Right ventricle myocardium inferior (tissue), 1 donor: ENCODE measurements at regions of chr19 and their contacts with region 1.

Region 1: GRCh38 chr19:12294249-12295158 is at the start of gene ZNF44:
- DNase-seq: peak; percentile 98
- ATAC-seq: peak; percentile 99
- total RNA-seq, gene ZNF44: 9.2 TPM

Region 2: DNA sequence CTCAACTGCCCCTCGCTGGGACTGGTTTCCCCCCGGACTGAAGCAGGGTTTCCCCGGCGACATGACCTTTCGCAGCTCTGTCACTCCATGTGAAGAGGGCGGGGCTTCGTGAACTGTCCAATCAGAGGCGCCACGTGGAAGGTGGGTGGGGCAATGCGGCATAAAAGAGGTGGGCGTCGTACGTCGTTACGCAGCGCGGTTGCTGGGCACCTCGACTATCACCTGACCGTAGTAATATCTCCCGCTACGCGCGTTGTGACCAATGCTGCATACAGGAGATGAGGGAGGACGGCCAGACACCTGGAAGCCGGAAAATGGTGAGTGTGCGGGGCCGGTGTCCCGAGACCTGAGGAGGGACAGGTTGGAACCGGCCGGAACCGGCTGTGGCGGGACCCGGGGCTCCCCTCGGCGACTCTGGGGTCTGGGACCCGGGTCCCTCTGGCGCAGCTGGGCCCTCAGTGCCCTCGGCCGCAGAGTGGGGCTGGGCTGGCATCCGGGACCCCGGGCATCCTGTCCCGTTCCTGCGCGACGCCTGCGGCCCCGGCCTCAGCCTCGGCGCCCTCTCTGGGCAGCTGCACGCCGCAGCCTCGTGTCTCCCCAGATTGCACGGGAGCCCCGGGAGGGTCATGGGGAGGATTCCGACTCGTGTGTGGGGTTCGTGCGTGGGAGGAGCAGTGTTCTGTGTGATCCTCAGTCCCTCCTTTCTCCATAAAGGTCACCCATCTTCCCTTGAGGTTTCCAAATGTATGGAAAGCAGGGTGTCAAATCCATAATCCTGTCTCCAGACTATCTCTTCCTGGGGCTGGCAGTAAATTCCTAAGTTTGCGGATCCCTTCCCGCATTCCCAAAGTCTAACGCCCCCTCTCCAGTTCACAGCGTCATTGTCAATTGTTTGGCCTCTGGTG is 99.4 kb before region 1 on chr19:
- intact Hi-C with region 1: no loop called
- DNase-seq: peak; percentile 90
- ATAC-seq: peak; percentile 97

Region 3: DNA sequence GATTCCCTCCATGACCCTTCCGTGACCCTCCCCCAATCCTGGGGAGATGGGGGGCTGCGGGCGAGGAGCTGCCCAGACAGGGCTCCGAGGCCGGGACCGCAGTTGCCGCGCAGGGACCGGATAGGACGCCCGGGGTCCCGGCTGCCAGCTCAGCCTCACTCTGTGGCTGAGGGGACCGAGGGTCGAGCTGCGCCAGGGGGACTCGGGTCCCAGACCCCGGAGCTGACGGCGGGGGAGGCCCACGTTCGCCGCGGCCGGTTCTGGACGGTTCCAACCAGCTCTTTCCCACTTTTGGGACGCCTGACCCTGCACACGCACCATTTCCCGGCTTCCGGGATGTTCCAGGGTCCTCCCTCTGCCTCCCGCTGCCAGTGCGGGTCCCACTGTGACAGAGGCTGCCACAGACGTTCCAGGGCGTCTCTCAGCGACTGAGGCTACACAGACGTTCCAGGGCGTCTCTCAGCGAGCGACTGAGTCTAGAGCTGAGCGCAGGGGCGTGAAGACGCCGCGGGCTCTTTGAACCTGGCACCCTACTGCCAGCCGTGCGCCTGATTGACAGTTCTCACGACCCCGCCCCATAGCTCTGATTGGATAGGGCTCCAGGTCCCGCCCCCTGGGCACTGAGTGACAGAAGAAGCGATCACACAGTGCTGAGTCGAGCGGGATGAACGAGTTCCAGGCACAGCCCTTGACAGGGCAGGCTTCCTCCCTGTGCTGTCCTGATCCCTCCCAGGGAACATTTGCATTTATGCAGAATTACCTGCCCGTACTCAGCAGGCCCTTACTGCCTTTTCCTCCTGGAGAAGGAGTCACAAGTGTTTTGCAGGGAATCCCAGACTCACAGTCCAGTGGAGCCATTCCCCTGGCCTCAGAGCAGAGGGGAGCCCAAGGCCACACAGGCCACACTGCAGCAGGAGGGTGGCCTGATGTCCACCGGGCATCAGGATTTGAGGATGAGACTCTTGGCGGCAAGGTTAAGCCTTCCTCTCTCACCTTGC is 39.0 kb after region 1 on chr19 and contains the start of gene ZNF563:
- intact Hi-C with region 1: loop called (anchors 5 kb)
- DNase-seq: peak; percentile 97
- ATAC-seq: peak; percentile 99
- total RNA-seq, gene ZNF563: 5.3 TPM

Region 4: DNA sequence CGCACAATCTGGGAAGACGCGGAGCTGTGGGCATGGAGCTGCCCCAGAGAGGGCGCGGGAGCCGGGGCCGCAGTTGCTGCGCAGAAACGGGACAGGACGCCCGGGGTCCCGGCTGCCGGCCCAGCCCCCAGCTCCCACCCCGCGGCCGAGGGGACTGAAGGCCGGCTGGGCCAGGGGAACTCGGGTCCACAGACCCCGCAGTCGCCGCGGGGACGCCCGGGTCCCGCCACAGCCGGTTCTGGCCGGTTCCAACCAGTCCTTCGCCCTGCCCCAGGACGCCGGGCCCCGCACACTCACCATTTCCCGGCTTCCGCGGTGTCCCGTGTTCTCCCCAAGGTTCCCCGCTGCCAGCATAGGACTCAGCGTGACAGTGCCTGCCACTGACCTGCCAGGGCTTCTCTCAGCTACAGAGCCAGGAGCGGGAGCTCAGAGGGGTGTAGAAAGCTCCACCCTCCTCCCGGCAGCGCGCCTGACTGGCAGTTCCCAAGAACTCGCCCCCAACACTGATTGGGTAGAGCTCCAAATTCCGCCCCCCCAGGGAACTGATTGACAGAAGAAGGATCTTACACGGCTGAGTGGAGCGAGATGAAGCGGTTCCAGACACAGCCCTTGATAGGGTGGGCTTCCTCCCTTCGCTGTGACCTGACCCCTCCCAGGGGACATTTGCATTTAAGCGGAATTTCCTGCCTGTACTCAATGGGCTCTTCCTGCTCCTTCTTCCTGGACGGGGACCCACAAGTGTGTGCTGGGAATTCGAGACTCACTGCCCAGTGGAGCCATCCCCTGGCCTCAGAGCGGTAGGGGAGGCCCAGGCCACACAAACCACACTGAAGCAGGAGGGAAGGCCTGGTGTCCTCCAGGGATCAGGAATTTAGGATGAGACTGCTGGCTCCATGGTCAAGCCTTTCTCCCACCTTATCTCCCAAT is 71.0 kb after region 1 on chr19 and contains the start of gene ZNF442:
- intact Hi-C with region 1: loop called (anchors 2 kb)
- DNase-seq: peak; percentile 95
- ATAC-seq: peak; percentile 99
- total RNA-seq, gene ZNF442: 2.4 TPM